IMR-90 (cell line): ENCODE measurements at regions of chr19 and their contacts with region 1.

Region 1: DNA sequence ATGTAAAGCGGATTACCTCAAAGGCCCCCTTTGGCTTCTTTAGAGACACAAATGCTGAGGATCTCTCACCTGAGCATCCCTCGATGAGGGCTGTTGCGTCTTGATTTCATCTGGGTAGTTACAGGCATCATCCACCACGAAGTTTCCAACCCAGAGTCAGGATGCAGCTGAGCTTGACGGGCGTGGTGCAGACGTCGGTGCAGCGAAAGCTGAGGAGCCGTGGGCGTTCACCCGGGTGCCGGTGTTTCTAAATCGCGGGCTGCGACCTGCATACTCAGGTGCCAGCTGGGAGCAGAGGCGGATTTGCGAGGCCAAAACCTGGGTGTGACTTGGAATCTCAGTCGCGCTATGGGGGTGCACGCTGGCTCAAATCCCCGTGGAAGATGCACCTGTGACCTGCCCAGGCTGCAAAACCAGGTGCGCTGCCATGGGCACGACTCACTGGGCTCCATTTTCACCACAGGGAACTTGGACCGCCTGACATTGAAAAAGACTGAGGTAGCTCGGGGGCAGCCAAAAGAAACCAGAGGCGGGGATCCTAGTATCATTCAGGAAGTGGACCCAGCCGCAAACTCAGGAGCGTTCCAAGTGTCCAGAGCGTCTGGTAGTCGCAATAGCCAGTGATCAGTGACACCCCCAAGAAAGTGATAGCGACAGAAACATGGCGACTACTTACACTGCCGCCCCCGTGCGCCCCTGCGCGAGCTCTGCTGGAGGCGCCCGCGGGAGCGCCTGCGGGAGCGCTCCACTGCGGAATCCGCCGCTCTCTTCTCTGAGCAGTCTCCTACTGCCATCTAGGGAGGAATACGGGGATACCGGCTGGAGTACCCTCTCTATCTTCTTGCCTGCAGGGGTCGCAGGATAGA is 36.4 kb upstream of the IGFL4 start:
- DNase-seq: peak; percentile 79
- ATAC-seq: peak; percentile 91
- H3K4me3 ChIP-seq: peak overlapping the region; percentile 27
- H3K27ac ChIP-seq: no peak overlapping the region
- H3K4me1 ChIP-seq: no peaks in the 10 kb centered on the region
- H3K27me3 ChIP-seq: peaks cover 49% of the 10 kb centered on the region
- CTCF ChIP-seq: peak; percentile 100; the same call in 1 of the 2 replicates
- POLR2A ChIP-seq: no peak
- RAD21 ChIP-seq: peak; percentile 96

Region 2: DNA sequence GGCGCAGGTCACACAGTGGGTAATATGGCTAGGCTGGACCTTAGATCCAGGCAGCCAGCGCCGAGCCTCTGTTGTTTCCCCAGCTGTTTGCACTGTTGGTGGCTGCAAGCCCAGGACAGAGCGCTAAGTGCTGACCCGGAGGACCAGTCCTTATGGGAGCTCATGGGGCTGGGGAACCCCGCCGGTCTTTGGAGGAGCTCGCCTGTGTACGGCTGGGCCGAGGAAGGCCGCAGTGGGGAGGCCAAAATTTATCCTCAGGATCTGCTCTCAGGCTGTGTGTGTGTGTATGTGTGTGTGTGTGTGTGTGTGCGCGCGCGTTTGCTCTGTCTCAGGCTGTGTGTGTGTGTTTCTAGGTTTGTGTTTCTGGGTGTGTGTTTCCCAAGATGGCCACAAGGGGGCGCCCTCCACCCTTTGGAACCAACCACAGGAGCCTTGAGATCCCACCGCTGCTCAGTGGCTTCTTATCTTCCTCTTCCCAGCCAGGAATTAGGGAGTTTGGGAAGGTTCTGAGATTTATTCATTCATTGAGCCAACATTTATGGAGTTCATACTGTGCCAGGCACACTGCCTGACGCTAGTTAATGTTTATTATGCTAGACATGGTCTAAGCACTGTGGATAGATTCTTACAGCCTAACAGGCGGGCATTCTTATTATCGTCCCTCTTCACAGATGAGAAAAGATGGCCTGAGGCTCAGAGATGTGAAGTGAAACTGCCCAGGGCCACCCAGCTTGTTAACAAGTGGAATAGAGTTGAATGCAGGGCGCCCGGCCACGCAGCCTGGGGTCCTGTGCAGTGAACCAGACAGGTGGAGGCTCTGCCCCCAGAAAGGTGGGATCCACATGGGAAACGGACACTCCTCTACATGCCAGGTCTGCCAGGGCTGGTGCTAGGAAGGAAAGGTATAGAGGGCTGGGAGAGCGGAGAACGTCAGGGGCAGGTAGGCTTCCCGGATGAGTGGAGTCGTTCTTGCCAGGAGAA is 67.4 kb before region 1 on chr19:
- CTCF ChIA-PET with region 1: no interaction called
- POLR2A ChIA-PET with region 1: no interaction called
- dilution Hi-C with region 1: no loop called
- in situ Hi-C with region 1: no loop called
- intact Hi-C with region 1: loop called (anchors 1 kb)
- DNase-seq: peak; percentile 58
- ATAC-seq: peak; percentile 97
- H3K4me3 ChIP-seq: no peak overlapping the region
- H3K27ac ChIP-seq: no peak overlapping the region
- H3K4me1 ChIP-seq: peaks cover 2% of the 10 kb centered on the region; the same call in 1 of the 2 replicates
- H3K27me3 ChIP-seq: peaks cover 4% of the 10 kb centered on the region; the same call in 1 of the 2 replicates
- CTCF ChIP-seq: peak; percentile 72
- POLR2A ChIP-seq: no peak
- RAD21 ChIP-seq: peak; percentile 54

Region 3: DNA sequence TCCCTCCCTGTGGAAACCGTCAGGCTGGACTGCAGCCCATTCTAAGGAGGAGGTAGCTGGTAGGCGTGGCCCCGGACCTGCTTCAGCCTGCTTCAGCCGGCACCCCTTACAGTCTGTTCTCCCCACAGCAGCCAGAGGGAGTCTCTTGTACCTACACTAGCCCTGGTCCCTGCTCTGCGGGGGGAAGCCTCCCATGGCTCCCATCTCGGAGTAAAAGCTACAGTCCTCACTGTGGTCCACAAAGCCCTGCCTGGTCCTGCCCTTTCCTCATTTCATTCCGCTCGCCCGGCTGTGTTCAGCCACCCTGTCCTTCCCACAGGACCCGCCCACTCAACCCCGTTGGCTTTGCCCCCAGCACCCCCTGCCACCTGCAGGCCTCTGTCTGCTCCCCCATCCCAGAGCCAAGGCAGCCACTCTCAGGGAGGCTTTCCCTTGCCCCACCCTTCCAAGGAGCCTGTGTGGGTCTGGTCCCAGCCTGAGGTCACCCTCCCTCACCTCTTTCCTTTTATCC is 55.6 kb before region 1 on chr19:
- CTCF ChIA-PET with region 1: interaction called, 27 read pairs
- POLR2A ChIA-PET with region 1: no interaction called
- dilution Hi-C with region 1: no loop called
- in situ Hi-C with region 1: loop called (anchors 10 kb)
- intact Hi-C with region 1: no loop called
- DNase-seq: no peak
- ATAC-seq: no peak
- H3K4me3 ChIP-seq: no peak overlapping the region
- H3K27ac ChIP-seq: no peak overlapping the region
- H3K4me1 ChIP-seq: no peaks in the 10 kb centered on the region
- H3K27me3 ChIP-seq: peaks cover 2% of the 10 kb centered on the region; the same call in 1 of the 2 replicates
- CTCF ChIP-seq: no peak
- POLR2A ChIP-seq: no peak
- RAD21 ChIP-seq: no peak

Region 4: GRCh38 chr19:46030812-46031550 is 46.2 kb before region 1 on chr19:
- CTCF ChIA-PET with region 1: interaction called, 27 read pairs
- POLR2A ChIA-PET with region 1: no interaction called
- dilution Hi-C with region 1: no loop called
- in situ Hi-C with region 1: loop called (anchors 10 kb)
- intact Hi-C with region 1: loop called (anchors 1 kb)
- DNase-seq: no peak
- ATAC-seq: no peak
- H3K4me3 ChIP-seq: no peak overlapping the region
- H3K27ac ChIP-seq: no peak overlapping the region
- H3K4me1 ChIP-seq: no peaks in the 10 kb centered on the region
- H3K27me3 ChIP-seq: peaks cover 18% of the 10 kb centered on the region
- CTCF ChIP-seq: no peak
- POLR2A ChIP-seq: no peak
- RAD21 ChIP-seq: no peak

Region 5: DNA sequence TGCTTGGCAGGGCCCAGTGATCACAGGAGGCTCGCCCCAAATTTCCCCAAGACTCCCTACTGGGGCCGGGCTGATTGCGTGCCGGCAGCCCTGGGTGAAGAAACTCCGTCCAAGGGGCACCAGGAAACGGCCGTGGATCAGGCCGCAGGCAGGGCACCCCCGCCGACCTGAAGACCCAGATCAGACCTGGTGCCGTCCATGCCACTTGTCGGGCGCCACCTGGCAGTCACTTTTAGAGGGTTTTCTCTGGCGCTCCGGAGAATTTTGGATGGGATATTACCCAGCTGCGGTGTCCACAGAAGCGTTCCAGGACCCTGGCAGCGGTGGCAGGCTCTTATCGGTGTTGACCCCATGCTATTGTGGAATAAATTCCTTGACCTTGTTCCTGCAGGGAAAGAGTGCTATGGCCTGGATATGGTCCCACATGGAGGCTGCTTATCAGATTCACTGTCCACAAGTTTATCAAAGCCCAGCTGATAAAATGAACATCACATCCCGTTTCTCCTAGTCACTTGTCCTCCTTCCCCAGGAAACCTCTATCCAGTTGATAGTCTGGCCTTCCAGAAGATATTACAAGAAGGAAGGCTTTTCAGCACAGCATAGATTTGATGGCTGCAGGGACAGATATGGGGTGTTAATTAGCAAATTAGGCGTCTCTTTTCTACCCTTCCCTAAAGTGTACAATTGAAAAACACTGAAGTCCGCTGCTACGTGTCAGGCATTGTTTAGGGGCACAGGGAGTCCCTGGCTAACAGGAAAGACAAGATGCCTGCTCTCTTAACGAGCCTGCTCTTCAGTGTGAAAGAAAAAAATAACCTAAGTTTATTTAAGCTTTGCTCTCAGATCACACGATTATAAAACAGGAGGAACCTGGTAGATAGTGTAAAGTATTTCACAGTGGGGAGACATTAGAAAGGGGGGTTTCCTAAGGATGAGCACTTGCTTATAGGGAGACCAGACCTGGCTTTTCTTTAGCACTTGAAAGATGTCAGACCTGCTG is 109.2 kb after region 1 on chr19:
- CTCF ChIA-PET with region 1: interaction called, 9 read pairs
- POLR2A ChIA-PET with region 1: no interaction called
- dilution Hi-C with region 1: no loop called
- in situ Hi-C with region 1: loop called (anchors 5 kb)
- intact Hi-C with region 1: loop called (anchors 1 kb)
- DNase-seq: no peak
- ATAC-seq: no peak
- H3K4me3 ChIP-seq: no peak overlapping the region
- H3K27ac ChIP-seq: no peak overlapping the region
- H3K4me1 ChIP-seq: no peaks in the 10 kb centered on the region
- H3K27me3 ChIP-seq: peaks cover 54% of the 10 kb centered on the region
- CTCF ChIP-seq: no peak
- POLR2A ChIP-seq: no peak
- RAD21 ChIP-seq: no peak

Region 6: GRCh38 chr19:46265217-46265828 is 188.1 kb after region 1 on chr19:
- CTCF ChIA-PET with region 1: interaction called, 6 read pairs
- POLR2A ChIA-PET with region 1: no interaction called
- dilution Hi-C with region 1: no loop called
- in situ Hi-C with region 1: loop called (anchors 5 kb)
- intact Hi-C with region 1: loop called (anchors 1 kb)
- DNase-seq: peak; percentile 74
- ATAC-seq: peak; percentile 99
- H3K4me3 ChIP-seq: no peak overlapping the region
- H3K27ac ChIP-seq: no peak overlapping the region
- H3K4me1 ChIP-seq: no peaks in the 10 kb centered on the region
- H3K27me3 ChIP-seq: peaks cover 35% of the 10 kb centered on the region
- CTCF ChIP-seq: peak; percentile 91
- POLR2A ChIP-seq: no peak
- RAD21 ChIP-seq: peak; percentile 85